Right ventricle myocardium inferior (tissue), 1 donor: ENCODE measurements at regions of chr19 and their contacts with region 1.

Region 1: DNA sequence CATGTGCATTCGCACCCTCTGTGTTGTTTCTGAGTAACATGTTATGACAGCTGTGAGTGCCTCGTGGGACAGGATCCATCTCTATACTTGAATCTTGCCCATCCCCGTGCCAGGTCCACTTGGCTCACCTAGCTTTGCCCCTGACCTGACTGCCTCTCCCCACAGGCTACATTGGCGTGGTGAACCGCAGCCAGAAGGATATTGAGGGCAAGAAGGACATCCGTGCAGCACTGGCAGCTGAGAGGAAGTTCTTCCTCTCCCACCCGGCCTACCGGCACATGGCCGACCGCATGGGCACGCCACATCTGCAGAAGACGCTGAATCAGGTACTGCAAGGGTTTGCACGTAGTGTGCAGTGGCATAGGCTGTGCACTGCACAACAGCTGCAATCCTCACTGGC is 53.2 kb downstream of the TMED1 start:
- DNase-seq: peak; percentile 81
- ATAC-seq: peak; percentile 86

Region 2: DNA sequence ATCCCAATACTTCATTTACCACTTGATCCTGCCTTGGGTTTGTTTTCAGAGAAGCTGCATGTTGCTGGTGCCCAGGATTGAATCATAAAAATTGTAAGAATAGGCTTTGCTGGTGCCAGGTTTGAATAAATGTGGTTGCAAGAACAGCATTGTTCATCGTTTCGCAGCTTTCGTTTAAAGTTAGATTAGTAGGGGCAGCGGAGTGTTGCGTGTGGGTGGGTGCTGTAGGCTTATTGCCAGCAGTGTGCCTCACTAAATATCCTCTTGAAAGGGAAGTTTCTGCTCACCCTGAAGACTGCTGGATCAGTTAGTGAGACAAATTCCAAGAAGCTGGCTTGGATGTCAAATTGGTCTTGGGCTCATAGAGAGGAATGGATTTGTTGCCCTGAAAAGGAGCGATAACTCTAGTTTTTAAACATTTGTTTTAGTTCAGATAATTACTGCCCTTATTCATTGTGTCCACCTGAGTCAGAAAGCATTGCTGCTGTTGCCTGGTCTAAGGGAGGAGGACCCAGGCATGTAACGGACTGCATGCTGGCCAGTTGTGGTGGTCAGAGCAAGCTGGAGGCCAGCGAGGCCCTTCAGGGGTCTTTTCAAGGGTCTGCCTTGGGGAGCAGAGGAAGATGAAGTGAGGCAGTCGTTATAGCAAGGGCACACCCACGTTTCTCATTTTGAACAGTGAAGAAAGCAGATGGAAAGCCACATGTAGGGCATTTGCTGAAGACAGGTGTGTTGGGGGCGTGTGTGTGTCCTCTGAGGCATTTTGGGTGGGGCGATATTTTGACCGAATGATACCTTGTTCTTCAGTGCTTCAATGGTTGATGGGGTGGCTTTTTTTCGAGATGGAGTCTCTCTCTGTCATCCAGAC is 120.2 kb before region 1 on chr19:
- intact Hi-C with region 1: no loop called
- DNase-seq: no peak
- ATAC-seq: no peak

Region 3: GRCh38 chr19:10769533-10770491 is 13.0 kb before region 1 on chr19:
- intact Hi-C with region 1: loop called (anchors 1 kb)
- DNase-seq: no peak
- ATAC-seq: peak; percentile 84